Activated CD4-positive, alpha-beta T cell treated with anti-CD3 and anti-CD28 coated beads, Interleukin-2, amount 10 ng/mL, durations not matched to agents 24 days and 14 days (primary cell): ENCODE measurements at regions of chr1 and their contacts with region 1.

Region 1: DNA sequence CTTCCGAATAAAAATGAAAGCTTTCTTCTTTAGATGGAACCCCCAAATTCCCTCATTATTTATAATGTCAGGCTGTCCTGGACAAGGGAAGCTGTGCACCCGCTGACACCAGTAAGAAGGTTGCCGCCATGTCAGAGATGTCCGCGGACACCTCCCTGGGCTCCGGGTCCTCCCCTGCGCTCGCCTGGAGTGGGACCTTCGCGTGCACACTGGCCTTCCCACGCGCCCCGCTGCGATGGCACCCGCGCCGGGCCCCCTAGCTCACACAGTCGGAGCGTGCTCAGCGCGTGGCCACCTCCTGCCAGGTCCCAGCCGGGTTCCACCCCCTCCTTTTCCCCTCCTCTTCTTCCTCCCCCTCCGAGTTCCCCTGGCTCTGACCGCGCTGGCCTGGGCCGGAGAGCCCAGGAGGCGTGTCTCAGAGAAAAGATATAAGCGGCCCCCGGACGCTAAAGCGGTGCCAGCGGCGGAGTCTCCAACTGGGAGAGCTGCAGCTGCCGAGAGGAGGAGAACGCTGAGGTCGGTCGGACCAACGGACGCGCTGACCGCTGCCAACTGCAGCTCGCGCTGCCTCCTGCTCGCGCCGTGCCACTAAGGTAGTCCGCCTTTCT is at the start of gene G0S2:
- DNase-seq: peak; percentile 82
- H3K4me3 Mint-ChIP-seq: peak within 1 kb of the TSS; percentile 89
- H3K27ac Mint-ChIP-seq: peak within 1 kb of the TSS; percentile 79
- H3K4me1 Mint-ChIP-seq: peaks cover 75% of the 10 kb centered on the region
- H3K27me3 Mint-ChIP-seq: peaks cover 6% of the 10 kb centered on the region
- total RNA-seq, gene G0S2: 449 and 477 TPM in 2 replicates

Region 2: GRCh38 chr1:209651148-209651547 is 23.9 kb before region 1 on chr1:
- intact Hi-C with region 1: loop called (anchors 1 kb)
- DNase-seq: peak; percentile 92
- H3K4me3 Mint-ChIP-seq: peak overlapping the region; percentile 56
- H3K27ac Mint-ChIP-seq: peak overlapping the region; percentile 73
- H3K4me1 Mint-ChIP-seq: peaks cover 64% of the 10 kb centered on the region
- H3K27me3 Mint-ChIP-seq: no peaks in the 10 kb centered on the region

Region 3: GRCh38 chr1:209685821-209686220 is 10.8 kb after region 1 on chr1:
- intact Hi-C with region 1: loop called (anchors 1 kb)
- DNase-seq: peak; percentile 88
- H3K4me3 Mint-ChIP-seq: peak overlapping the region; percentile 76
- H3K27ac Mint-ChIP-seq: peak overlapping the region; percentile 81
- H3K4me1 Mint-ChIP-seq: peaks cover 39% of the 10 kb centered on the region
- H3K27me3 Mint-ChIP-seq: peaks cover 3% of the 10 kb centered on the region

Region 4: DNA sequence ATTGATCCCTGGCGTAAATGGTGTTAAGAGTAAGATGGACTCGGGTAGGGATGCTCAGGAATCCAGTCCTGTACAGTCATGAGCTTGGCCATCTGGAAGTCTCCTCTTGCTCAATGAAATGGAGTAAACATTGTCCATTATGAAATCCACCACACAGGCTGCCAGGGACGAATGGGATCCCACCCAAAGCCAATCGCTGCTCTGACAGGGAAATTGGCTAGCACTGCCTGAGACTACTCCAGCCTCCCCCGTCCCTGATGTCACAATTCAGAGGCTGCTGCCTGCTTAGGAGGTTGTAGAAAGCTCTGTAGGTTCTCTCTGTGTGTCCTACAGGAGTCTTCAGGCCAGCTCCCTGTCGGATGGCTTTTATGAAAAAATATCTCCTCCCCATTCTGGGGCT is 29.5 kb after region 1 on chr1 and contains the start of gene HSD11B1:
- intact Hi-C with region 1: loop called (anchors 2 kb)
- DNase-seq: no peak
- H3K4me3 Mint-ChIP-seq: peak within 1 kb of the TSS; percentile 54
- H3K27ac Mint-ChIP-seq: peak within 1 kb of the TSS; percentile 91
- H3K4me1 Mint-ChIP-seq: peaks cover 71% of the 10 kb centered on the region
- H3K27me3 Mint-ChIP-seq: no peaks in the 10 kb centered on the region
- total RNA-seq, gene HSD11B1: 15.1 TPM in 2 replicates

Region 5: GRCh38 chr1:209736490-209737117 is 61.5 kb after region 1 on chr1:
- intact Hi-C with region 1: loop called (anchors 1 kb)
- DNase-seq: no peak
- H3K4me3 Mint-ChIP-seq: peak overlapping the region; percentile 34
- H3K27ac Mint-ChIP-seq: peak overlapping the region; percentile 93
- H3K4me1 Mint-ChIP-seq: peaks cover 54% of the 10 kb centered on the region
- H3K27me3 Mint-ChIP-seq: no peaks in the 10 kb centered on the region

Region 6: DNA sequence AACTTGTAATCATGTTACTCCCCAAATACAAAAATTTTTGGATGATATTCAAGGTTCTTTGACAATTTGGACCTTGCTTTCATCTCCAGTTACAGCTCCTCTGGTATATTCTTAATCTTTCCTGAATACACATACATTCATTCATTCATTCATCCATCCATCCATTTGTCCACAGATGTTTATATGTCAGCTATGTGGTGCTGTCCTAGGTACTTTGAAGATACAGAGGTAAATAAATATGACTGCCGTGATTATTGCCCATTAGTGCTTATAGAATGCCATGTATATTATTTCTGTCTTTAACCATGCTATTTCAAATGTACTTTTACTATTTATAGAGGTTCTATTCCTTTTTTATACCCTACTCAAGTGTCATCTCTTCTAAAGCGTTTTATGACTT is 335.1 kb after region 1 on chr1:
- intact Hi-C with region 1: no loop called
- DNase-seq: no peak
- H3K4me3 Mint-ChIP-seq: no peak overlapping the region
- H3K27ac Mint-ChIP-seq: no peak overlapping the region
- H3K4me1 Mint-ChIP-seq: no peaks in the 10 kb centered on the region
- H3K27me3 Mint-ChIP-seq: no peaks in the 10 kb centered on the region

Region 7: GRCh38 chr1:210464519-210465039 is 789.5 kb after region 1 on chr1:
- intact Hi-C with region 1: no loop called
- DNase-seq: no peak
- H3K4me3 Mint-ChIP-seq: no peak overlapping the region
- H3K27ac Mint-ChIP-seq: no peak overlapping the region
- H3K4me1 Mint-ChIP-seq: peaks cover 12% of the 10 kb centered on the region
- H3K27me3 Mint-ChIP-seq: peaks cover 7% of the 10 kb centered on the region